Activated CD8-positive, alpha-beta T cell treated with anti-CD3 and anti-CD28 coated beads, Interleukin-2, amount 10 ng/mL, durations not matched to agents 7 days and 5 days (primary cell): ENCODE measurements at regions of chr17 and their contacts with region 1.

Region 1: DNA sequence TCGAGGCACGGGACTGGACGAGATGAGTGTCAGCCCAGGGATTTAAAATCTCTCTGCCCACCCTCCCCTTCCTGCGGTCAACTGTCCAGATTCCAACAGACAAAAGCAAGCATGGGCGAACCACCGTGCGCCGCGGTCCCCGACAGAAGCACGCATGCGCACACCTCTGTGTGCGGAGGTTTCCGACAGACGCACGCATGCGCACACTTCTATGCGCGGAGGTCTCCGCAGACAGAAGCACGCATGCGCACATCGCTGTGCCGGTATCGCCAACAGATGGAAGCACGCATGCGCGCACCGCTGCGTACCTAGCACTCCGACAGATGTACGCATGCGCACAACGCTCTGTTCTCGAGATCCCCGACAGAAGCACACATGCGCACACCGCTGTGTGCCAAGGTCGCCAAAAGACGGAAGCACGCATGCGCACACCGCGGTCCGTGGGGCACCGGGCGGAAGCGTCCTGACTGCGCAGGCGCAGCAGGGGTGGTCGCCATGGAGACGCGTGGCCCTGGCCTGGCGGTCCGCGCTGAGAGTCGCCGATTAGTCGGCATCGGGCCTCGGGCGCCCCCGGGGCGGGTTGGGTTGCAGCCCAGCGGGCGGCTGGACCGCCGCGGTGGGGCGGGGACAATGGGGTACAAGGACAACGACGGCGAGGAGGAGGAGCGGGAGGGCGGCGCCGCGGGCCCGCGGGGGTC is 57.4 kb upstream of the RPH3AL start:
- DNase-seq: peak; percentile 100
- ATAC-seq: peak; percentile 72
- H3K4me3 Mint-ChIP-seq: peak overlapping the region; percentile 72
- H3K27ac Mint-ChIP-seq: peak overlapping the region; percentile 81
- H3K4me1 Mint-ChIP-seq: peaks cover 49% of the 10 kb centered on the region
- H3K27me3 Mint-ChIP-seq: peaks cover 3% of the 10 kb centered on the region

Region 2: GRCh38 chr17:333626-334396 is 76.2 kb before region 1 on chr17:
- CTCF ChIA-PET with region 1: no interaction called
- POLR2A ChIA-PET with region 1: no interaction called
- DNase-seq: no peak
- ATAC-seq: no peak
- H3K4me3 Mint-ChIP-seq: no peak overlapping the region
- H3K27ac Mint-ChIP-seq: no peak overlapping the region
- H3K4me1 Mint-ChIP-seq: peaks cover 15% of the 10 kb centered on the region
- H3K27me3 Mint-ChIP-seq: peaks cover 16% of the 10 kb centered on the region

Region 3: DNA sequence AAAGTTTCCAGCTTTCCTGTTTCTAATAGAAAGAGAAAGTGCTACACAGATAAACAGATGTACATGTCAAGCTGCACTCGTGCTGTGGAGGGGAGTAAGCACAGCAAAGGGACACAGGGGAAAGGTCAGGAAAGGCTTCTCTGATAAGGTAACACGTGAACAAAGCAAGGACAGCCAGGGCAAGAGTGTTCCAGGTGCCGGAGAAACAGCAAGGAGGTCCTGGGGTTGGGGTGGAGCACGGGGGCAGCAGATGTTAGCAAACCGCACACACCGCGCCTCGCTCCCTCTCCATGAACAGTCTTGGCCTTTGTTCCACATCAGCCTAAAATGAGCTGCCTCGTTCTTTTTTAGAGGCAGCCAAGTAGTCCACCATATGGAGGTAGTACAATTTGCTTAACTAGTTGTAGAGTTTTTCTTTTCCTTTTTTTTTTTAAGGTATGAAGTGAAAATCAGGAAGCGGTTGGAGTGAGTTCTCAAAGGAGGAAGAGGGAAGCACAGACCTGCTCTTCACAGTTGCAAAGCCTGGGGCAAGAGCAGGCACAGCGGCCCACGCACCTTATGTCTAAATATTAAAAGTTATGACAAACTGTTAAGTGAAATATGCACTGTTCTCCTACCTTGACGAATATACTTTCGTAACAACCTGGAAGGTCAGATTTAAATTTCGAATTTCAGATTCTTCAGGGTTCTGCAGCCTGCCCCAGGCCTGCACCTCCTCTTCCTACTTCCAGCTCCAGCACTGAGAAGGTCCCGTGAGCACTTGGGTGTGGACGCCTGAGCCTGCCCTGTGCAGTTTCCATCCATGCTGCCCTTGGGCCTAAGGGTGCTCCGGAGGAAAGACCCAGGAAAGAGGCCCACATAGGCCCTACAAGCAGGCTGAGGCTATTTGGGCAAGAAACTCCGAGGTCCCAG is 15.9 kb before region 1 on chr17:
- CTCF ChIA-PET with region 1: no interaction called
- POLR2A ChIA-PET with region 1: no interaction called
- DNase-seq: no peak
- ATAC-seq: no peak
- H3K4me3 Mint-ChIP-seq: no peak overlapping the region
- H3K27ac Mint-ChIP-seq: no peak overlapping the region
- H3K4me1 Mint-ChIP-seq: peaks cover 5% of the 10 kb centered on the region
- H3K27me3 Mint-ChIP-seq: no peaks in the 10 kb centered on the region

Region 4: GRCh38 chr17:497241-498034 is 87.4 kb after region 1 on chr17:
- CTCF ChIA-PET with region 1: interaction called, 45 read pairs
- POLR2A ChIA-PET with region 1: interaction called, 3 read pairs
- DNase-seq: peak; percentile 34
- ATAC-seq: peak; percentile 51
- H3K4me3 Mint-ChIP-seq: peak overlapping the region; percentile 21
- H3K27ac Mint-ChIP-seq: peak overlapping the region; percentile 64
- H3K4me1 Mint-ChIP-seq: peaks cover 58% of the 10 kb centered on the region
- H3K27me3 Mint-ChIP-seq: peaks cover 6% of the 10 kb centered on the region

Region 5: DNA sequence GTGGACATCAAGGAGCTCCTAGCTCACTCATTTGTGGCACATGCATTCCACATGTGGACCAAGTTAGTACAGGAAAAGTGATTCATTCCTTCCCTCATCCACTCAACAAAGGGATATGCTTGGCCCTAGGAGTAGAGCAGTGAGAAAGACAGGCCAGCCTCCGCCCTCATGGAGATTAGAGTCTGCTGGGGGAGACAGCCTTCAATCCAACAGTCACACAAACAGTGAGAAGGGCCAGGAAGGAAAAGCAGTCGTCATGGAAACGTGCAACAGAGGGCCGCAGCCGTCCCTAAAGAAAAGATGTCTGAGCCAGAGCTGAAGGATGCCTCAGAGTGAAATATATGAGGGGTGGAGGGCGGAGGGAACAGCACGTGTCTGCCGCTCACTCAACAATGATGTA is 194.8 kb after region 1 on chr17:
- CTCF ChIA-PET with region 1: interaction called, 12 read pairs
- POLR2A ChIA-PET with region 1: no interaction called
- DNase-seq: no peak
- ATAC-seq: no peak
- H3K4me3 Mint-ChIP-seq: no peak overlapping the region
- H3K27ac Mint-ChIP-seq: no peak overlapping the region
- H3K4me1 Mint-ChIP-seq: peaks cover 12% of the 10 kb centered on the region
- H3K27me3 Mint-ChIP-seq: no peaks in the 10 kb centered on the region

Region 6: GRCh38 chr17:688100-688989 is 278.3 kb after region 1 on chr17:
- CTCF ChIA-PET with region 1: interaction called, 41 read pairs
- POLR2A ChIA-PET with region 1: no interaction called
- DNase-seq: no peak
- ATAC-seq: no peak
- H3K4me3 Mint-ChIP-seq: no peak overlapping the region
- H3K27ac Mint-ChIP-seq: no peak overlapping the region
- H3K4me1 Mint-ChIP-seq: peaks cover 4% of the 10 kb centered on the region
- H3K27me3 Mint-ChIP-seq: no peaks in the 10 kb centered on the region

Region 7: GRCh38 chr17:716238-716637 is 306.2 kb after region 1 on chr17:
- CTCF ChIA-PET with region 1: interaction called, 17 read pairs
- POLR2A ChIA-PET with region 1: no interaction called
- DNase-seq: no peak
- ATAC-seq: no peak
- H3K4me3 Mint-ChIP-seq: no peak overlapping the region
- H3K27ac Mint-ChIP-seq: no peak overlapping the region
- H3K4me1 Mint-ChIP-seq: peaks cover 21% of the 10 kb centered on the region
- H3K27me3 Mint-ChIP-seq: no peaks in the 10 kb centered on the region